ENCODE measurements at regions of chr1 and their contacts with region 1.

Region 1: DNA sequence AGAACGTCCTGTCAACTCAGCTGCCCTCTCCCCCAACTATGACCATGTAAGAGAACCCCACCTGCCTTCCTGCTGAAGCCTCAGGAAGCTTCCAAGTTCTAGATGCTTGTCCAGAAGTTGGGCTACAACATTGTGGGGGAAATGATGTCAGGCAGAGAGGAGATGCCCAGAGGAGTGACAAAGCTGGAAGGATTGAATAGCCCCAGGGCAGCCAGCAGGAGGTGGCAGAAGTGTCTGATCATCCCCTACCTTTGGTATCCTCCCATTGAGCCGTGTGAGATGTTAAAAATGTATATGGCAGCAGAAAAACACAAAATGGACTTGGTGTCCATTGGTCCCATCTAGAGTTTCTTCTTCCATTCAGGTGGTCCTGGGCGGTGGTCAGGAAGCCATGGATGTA is 6.6 kb downstream of the EIF3I start:
- DNase-seq: no peak
- ATAC-seq: no peak
- H3K4me3 ChIP-seq: no peak overlapping the region
- H3K27ac ChIP-seq: no peak overlapping the region
- H3K4me1 ChIP-seq: peaks cover 6% of the 10 kb centered on the region
- H3K27me3 ChIP-seq: no peaks in the 10 kb centered on the region
- CTCF ChIP-seq: no peak
- EP300 ChIP-seq: no peak
- POLR2A ChIP-seq: no peak
- RAD21 ChIP-seq: no peak

Region 2: DNA sequence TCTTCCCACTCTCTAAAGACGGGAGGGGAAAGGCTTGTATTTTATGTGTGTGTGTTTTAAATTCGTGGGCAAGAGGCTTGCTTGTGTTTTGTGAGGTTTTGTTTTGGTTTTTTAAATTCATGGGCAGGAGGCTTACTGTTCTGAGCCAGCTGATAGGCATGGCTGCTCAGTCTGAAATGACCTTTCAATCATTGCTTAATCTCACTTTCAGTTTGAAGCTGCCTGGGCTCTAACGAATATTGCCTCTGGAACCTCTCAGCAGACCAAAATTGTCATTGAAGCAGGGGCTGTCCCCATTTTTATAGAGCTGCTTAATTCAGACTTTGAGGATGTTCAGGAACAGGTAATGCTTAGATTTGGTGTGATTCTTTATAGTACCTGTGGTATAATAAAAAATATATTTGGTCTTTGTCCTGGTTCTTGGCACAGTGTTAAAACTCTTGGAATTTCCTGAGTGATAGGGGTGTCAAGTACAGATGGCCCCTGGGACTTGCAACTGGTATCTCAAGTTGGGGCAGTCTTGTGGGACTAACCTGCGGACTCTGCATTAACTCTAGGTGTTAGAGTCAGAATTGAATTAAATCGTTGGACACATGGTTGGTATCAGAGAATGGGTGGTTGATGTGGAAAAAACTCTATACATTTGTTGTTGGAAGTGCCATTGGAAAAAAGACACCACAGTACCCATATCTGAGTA is 69.4 kb before region 1 on chr1:
- CTCF ChIA-PET with region 1: no interaction called
- POLR2A ChIA-PET with region 1: no interaction called
- in situ Hi-C with region 1: no loop called
- intact Hi-C with region 1: no loop called
- DNase-seq: no peak
- ATAC-seq: no peak
- H3K4me3 ChIP-seq: no peak overlapping the region
- H3K27ac ChIP-seq: no peak overlapping the region
- H3K4me1 ChIP-seq: no peaks in the 10 kb centered on the region
- H3K27me3 ChIP-seq: no peaks in the 10 kb centered on the region
- CTCF ChIP-seq: no peak
- EP300 ChIP-seq: no peak
- POLR2A ChIP-seq: no peak
- RAD21 ChIP-seq: no peak

Region 3: GRCh38 chr1:32240140-32240951 is 11.6 kb after region 1 on chr1:
- CTCF ChIA-PET with region 1: no interaction called
- POLR2A ChIA-PET with region 1: interaction called, 12 read pairs
- in situ Hi-C with region 1: no loop called
- intact Hi-C with region 1: no loop called
- DNase-seq: no peak
- ATAC-seq: no peak
- H3K4me3 ChIP-seq: peak overlapping the region; percentile 42 to 57 (median 56); a peak in 3 of 6 replicates
- H3K27ac ChIP-seq: no peak overlapping the region
- H3K4me1 ChIP-seq: peaks cover 44% of the 10 kb centered on the region
- H3K27me3 ChIP-seq: no peaks in the 10 kb centered on the region
- CTCF ChIP-seq: no peak
- EP300 ChIP-seq: no peak
- POLR2A ChIP-seq: no peak
- RAD21 ChIP-seq: no peak

Region 4: DNA sequence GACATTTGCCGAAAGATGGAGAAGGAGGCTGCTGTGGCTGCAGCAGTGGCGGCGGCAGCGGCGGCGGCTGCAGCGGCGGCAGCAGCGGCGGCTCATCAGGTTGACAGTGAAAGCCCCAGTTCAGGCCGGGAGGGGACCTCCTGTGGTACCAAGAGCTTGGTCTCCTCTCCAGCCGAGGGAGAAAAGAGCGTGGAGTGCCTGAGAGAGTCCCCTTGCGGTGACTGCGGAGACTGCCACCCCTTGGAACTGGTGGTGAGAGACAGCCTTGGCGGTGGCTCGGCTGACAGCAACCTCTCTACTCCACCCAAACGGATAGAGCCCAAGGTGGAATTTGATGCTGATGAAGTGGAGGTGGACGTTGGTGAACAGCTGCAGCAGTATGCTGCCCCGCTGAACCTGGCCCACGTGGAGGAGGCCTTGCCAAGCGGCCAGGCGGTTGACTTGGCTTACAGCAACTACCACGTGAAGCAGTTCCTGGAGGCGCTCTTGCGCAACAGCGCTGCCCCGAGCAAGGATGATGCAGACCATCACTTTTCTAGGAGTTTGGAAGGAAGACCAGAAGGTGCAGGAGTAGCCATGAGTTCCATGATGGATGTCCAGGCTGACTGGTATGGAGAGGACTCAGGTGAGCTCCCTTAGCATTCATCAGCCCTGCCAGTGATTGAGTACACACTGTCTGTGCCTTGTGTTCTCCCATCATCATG is 242.4 kb after region 1 on chr1:
- CTCF ChIA-PET with region 1: no interaction called
- POLR2A ChIA-PET with region 1: no interaction called
- in situ Hi-C with region 1: no loop called
- intact Hi-C with region 1: no loop called
- DNase-seq: no peak
- ATAC-seq: peak; percentile 76
- H3K4me3 ChIP-seq: no peak overlapping the region
- H3K27ac ChIP-seq: no peak overlapping the region
- H3K4me1 ChIP-seq: peaks cover 10% of the 10 kb centered on the region; the same call in 1 of the 2 replicates
- H3K27me3 ChIP-seq: peaks cover under 1 to 6% of the 10 kb centered on the region in 2 experiments; a peak in 3 of 5 replicates
- CTCF ChIP-seq: peak; percentile 40; the same call in 1 of the 2 replicates
- EP300 ChIP-seq: no peak
- POLR2A ChIP-seq: no peak
- RAD21 ChIP-seq: no peak

Measured in HepG2 (cell line).